Breast epithelium (tissue), 4 donors: ENCODE measurements at regions of chr17 and their contacts with region 1.

Region 1: GRCh38 chr17:72011561-72011960 is 109.3 kb upstream of the SOX9 start:
- DNase-seq: peak in 1 of 2 donors; percentile 29
- H3K4me3 ChIP-seq: no peak overlapping the region
- H3K27ac ChIP-seq: no peak overlapping the region
- H3K4me1 ChIP-seq: no peaks in the 10 kb centered on the region
- H3K27me3 ChIP-seq: no peaks in the 10 kb centered on the region
- CTCF ChIP-seq: no peak
- POLR2A ChIP-seq: no peak

Region 2: DNA sequence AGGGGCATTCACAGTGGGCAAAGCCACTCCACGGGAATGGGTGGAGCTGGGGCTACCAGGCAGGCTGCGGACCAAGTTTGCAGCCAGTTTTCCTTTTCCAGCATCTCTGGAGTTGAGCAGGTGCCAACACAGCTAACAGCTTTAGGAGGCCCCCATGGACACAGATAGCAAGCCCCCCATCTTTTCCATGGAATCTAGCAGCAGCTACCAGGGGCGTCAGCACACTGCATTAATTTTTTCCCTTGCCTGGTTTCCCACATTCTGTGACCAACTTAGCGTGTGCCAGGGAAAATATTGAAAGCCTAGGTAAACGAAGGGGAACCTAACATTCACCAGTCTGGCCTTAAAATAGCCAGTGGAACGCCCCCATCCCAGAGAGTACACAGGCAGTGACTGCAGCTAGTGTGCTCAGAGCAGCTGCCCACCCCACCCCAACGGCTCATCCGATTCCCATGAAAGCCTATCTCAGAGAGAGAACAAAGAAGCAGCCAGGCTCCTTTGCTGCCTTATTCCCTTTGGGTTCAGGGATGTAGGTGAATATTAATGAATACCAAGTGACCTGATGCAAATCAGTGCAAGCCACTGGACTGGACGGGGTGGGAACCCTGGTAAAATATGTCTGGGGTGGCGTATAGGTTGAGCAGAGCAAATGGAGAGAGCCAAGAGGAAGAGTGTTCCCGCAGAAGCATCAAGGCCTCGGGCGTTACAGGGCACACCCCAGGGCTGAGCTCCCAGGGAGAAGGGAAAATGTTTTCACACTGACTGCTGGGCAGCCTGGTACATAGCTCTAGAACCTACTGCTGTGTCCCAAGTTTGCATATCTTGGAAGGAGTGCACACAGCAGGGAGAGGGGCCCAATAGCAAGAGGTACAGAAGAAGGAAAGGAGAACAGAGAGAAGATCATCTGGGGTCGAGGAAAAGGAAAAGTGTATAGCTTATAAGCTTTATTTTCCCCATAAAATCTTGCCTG is 35.4 kb after region 1 on chr17:
- intact Hi-C with region 1: loop called (anchors 2 kb)
- DNase-seq: no peak
- H3K4me3 ChIP-seq: peak overlapping the region in 1 of 3 donors; percentile 24
- H3K27ac ChIP-seq: peak overlapping the region; percentile 18 to 48
- H3K4me1 ChIP-seq: no peaks in the 10 kb centered on the region
- H3K27me3 ChIP-seq: no peaks in the 10 kb centered on the region
- CTCF ChIP-seq: no peak
- POLR2A ChIP-seq: no peak